Left colon (tissue), 2 donors: ENCODE measurements at regions of chr3 and their contacts with region 1.

Region 1: GRCh38 chr3:22117751-22118346 is 366.8 kb upstream of the ZNF385D start:
- DNase-seq: no peak
- ATAC-seq: no peak

Region 2: DNA sequence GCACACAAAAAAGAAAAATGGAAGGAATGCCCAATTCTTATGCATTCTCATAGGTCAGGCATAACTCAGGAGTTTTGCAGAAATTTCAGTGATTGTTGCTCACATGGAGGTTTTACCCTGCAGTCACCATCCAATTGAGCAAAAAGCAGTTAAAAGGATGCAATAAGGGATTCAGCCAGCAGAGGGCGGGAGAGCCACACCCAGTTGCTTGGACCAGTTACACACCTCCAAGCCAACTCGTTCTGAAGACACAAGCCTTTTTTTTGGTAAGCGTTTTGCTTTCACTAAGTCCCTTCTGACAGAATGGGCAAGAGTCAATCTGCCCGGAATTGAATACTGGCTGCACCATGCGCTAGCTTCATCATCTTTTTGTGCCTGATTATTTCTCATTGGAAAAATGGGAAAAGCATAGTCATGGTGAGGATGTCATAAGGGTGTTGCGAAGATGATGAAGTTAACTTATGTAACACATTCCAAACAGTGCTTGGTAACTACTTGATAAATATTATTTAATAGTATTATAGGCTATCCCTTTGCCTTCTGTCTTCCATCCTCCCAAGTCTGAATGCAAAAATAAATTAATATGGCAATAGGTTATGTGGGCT is 1777.4 kb before region 1 on chr3:
- intact Hi-C with region 1: loop called in 1 of 2 experiments (anchors 5 kb)
- DNase-seq: peak; percentile 23 to 50
- ATAC-seq: peak; percentile 60

Region 3: GRCh38 chr3:22199095-22199494 is 81.2 kb after region 1 on chr3:
- intact Hi-C with region 1: no loop called
- DNase-seq: no peak
- ATAC-seq: no peak

Region 4: GRCh38 chr3:22209578-22209977 is 91.7 kb after region 1 on chr3:
- intact Hi-C with region 1: no loop called
- DNase-seq: no peak
- ATAC-seq: no peak

Region 5: GRCh38 chr3:22269831-22270230 is 152.0 kb after region 1 on chr3:
- intact Hi-C with region 1: no loop called
- DNase-seq: no peak
- ATAC-seq: no peak